ENCODE measurements at regions of chr2 and their contacts with region 1.

Region 1: DNA sequence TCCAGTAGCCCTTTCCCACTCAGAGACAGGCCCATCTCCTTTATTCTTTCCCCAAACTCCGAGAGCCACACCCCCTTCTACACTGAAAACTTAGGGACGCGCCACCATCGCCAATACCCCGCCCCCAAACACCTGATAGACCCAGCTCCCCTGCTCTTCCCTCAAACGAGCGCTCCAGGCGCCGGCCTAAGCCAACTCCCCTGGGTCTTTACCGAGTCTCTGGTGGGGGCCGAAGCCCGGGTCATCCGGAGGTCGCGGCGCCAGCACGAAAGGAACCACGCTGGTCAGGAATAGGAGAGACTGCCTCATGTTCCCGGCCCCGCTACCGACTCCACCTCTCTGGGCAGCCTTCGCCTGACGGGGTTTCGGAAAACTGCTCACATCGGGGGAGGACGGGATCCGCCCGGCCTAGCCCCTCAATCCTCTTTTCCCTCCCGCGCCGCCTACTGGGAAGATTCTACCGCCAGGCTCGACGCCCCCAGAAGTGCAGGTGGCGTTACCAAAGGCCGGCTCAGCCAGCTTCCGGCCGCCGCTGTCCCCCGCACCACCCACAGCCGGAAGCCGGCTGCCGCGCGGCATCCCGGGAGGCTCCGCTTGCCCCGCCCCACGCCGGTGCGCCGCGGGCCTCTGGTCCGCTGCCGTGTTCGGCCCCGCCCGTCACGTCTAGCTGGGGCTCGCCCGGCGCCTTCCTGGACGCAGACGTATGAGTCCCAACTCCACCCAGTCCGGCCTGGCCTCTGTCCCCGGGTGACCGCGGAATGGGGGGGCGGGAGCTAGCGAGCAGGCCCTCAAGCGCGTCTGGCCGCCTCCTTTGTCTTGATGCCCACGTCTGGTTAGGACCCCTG is at the start of gene ADAM17:
- DNase-seq: peak; percentile 92
- H3K4me3 Mint-ChIP-seq: peak within 1 kb of the TSS; percentile 97
- H3K27ac Mint-ChIP-seq: peak within 1 kb of the TSS; percentile 94
- H3K4me1 Mint-ChIP-seq: peaks cover 58% of the 10 kb centered on the region
- H3K27me3 Mint-ChIP-seq: no peaks in the 10 kb centered on the region
- total RNA-seq, gene ADAM17: 28.9 to 31.0 TPM

Region 2: DNA sequence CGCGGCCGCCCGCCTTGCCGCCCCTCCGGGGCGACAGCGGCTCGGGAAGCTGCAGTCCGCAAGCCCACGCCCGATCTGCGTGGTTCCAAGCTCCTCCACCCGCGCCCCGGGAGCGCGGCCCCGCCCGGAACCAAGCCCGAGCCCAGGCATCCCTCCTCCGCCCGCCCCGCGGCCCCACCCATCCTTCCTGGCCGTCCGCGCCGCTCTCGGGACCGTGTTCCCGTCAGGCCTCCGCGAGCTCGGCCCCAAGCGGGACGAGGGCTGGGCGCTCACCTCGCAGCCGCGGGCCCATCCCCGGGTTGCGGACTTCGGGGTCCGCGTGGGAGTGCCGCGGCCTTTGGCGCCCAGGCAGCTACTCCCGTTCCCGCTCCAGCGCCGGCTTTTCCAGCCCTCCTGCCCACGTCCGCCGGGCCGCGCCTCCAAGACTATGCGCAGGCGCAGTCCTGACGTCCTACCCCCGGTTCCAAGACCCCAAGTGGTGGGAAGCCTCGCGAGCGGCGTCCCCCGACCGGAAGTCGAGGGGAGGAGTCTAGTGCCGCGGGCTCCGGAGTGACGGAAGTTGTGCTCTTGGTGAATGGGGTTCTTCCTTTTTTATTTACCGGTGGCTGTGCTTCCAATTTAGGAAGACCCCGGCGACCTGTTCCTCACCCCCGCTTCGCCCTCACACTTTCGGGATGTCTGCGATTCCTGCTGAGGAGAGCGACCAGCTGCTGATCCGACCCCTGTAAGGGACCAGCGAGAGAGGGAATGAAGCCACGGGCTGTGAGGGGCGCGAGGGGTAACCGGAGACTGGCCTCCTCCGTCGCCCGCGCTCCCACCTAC is 132.2 kb before region 1 on chr2 and contains the starts of genes CPSF3 and ITGB1BP1:
- CTCF ChIA-PET with region 1: no interaction called
- POLR2A ChIA-PET with region 1: interaction called, 34 read pairs
- DNase-seq: peak; percentile 97
- H3K4me3 Mint-ChIP-seq: no peak within 1 kb of the TSS
- H3K27ac Mint-ChIP-seq: no peak within 1 kb of the TSS
- H3K4me1 Mint-ChIP-seq: peaks cover 40% of the 10 kb centered on the region
- H3K27me3 Mint-ChIP-seq: no peaks in the 10 kb centered on the region
- total RNA-seq, gene CPSF3: 49.7 to 51.7 TPM
- total RNA-seq, gene ITGB1BP1: 112 to 119 TPM

Region 3: GRCh38 chr2:9578467-9579235 is 23.1 kb after region 1 on chr2:
- CTCF ChIA-PET with region 1: no interaction called
- POLR2A ChIA-PET with region 1: interaction called, 12 read pairs
- DNase-seq: no peak
- H3K4me3 Mint-ChIP-seq: no peak overlapping the region
- H3K27ac Mint-ChIP-seq: no peak overlapping the region
- H3K4me1 Mint-ChIP-seq: peaks cover 8% of the 10 kb centered on the region
- H3K27me3 Mint-ChIP-seq: no peaks in the 10 kb centered on the region

Region 4: DNA sequence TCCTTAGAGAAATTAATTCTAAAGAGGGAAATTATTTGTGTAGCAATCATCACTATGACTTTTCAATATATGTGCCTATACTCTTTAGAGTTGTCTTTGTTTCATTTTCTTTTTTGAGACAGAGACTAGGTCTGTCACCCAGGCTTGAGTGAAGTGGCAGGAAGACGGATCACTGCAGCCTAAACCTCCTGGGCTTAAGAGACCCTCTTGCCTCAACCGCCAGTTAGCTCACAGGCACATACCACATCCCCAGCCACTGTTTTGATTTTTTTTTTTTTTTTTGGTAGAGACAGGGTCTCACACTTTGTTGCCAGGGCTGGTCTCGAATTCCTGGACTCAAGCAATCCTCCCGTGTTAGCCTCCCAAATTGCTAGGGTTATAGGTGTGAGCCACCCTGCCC is 62.9 kb after region 1 on chr2:
- CTCF ChIA-PET with region 1: interaction called, 4 read pairs
- POLR2A ChIA-PET with region 1: interaction called, 19 read pairs
- DNase-seq: peak; percentile 52
- H3K4me3 Mint-ChIP-seq: peak overlapping the region; percentile 50
- H3K27ac Mint-ChIP-seq: peak overlapping the region; percentile 81
- H3K4me1 Mint-ChIP-seq: peaks cover 89% of the 10 kb centered on the region
- H3K27me3 Mint-ChIP-seq: no peaks in the 10 kb centered on the region

Region 5: GRCh38 chr2:9693211-9693520 is 137.6 kb after region 1 on chr2:
- CTCF ChIA-PET with region 1: no interaction called
- POLR2A ChIA-PET with region 1: interaction called, 11 read pairs
- DNase-seq: peak; percentile 50
- H3K4me3 Mint-ChIP-seq: no peak overlapping the region
- H3K27ac Mint-ChIP-seq: peak overlapping the region; percentile 62
- H3K4me1 Mint-ChIP-seq: peaks cover 39% of the 10 kb centered on the region
- H3K27me3 Mint-ChIP-seq: no peaks in the 10 kb centered on the region

Region 6: GRCh38 chr2:9770308-9771100 is 215.0 kb after region 1 on chr2:
- CTCF ChIA-PET with region 1: interaction called, 14 read pairs
- POLR2A ChIA-PET with region 1: interaction called, 3 read pairs
- DNase-seq: peak; percentile 73
- H3K4me3 Mint-ChIP-seq: no peak overlapping the region
- H3K27ac Mint-ChIP-seq: no peak overlapping the region
- H3K4me1 Mint-ChIP-seq: peaks cover 21% of the 10 kb centered on the region
- H3K27me3 Mint-ChIP-seq: no peaks in the 10 kb centered on the region

Measured in activated CD4-positive, alpha-beta memory T cell treated with anti-CD3 and anti-CD28 coated beads, Interleukin-2, amount 10 ng/mL, durations not matched to agents 7 days and 5 days (primary cell).